ENCODE measurements at regions of chr5 and their contacts with region 1.

Region 1: DNA sequence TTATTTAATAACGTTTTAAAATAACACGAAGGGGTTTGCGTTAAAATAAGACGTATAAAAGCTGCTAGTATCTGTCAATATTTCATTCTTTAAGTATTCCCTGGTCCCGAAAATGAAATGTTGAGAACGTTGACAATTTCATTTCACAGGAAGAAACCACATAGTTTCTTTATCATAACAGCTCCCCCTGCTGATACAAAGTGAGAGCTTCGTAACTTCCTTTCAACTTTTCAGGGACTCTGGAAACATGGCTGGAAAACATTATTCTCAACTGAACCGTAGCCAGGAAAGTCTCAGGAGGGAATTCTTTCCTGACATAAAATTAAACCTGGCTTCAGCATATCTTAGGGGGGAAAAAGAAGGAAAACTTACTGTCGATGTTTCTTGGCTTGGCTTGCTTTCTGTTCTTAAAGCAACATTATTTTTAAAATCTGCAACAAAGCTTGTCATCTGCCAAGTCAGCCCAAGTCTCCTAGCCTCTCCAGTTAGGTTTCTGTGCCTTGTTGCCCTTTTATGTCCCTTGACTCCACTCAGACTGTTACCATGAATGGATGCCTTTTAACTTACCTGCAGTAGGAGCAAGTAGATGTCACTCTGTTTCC is 122.9 kb upstream of the DAB2 start:
- DNase-seq: peak; percentile 6
- ATAC-seq: no peak
- H3K4me3 Mint-ChIP-seq: no peak overlapping the region
- H3K27ac Mint-ChIP-seq: no peak overlapping the region
- H3K4me1 Mint-ChIP-seq: no peaks in the 10 kb centered on the region
- H3K27me3 Mint-ChIP-seq: peaks cover 3% of the 10 kb centered on the region
- CTCF ChIP-seq: peak; percentile 70

Region 2: DNA sequence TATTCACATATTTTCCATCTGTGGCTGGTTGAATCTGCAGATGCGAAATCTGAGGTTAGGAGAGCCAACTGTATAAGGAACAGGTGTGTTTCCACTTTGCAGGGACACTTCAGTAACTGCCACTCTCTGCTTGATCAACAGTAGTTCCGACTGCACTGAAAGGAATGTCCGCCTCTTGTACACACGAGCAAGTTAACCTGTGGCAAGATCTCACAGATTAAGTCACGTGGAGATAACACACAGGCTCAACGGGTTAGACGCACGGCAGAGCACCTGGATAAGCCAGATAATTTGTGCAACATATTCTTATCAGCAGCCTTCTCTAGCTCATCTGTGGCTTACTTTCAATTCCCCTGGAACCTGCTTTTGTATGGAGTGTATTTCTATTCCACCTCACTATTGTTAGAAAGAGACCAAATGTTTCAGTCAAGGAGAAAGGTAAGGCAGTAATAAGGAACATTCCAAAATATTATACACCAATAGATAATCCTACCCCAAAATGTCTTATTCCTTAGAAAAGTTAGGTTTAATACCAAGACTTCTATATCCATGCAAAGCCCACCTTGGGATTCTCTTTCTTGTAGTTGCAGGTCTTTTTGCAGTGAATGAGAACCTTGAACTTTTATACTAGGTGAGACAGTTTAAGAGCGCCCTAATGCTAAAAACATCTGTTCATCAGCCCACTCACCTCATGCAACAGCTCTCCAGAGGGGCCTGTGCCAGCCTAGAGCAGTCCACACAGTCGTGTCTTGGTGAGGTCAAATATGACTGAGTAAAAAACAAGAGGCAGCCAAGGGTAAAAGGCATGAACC is 176.9 kb before region 1 on chr5:
- CTCF ChIA-PET with region 1: interaction called, 71 read pairs
- POLR2A ChIA-PET with region 1: no interaction called
- intact Hi-C with region 1: no loop called
- DNase-seq: no peak
- ATAC-seq: no peak
- H3K4me3 Mint-ChIP-seq: no peak overlapping the region
- H3K27ac Mint-ChIP-seq: no peak overlapping the region
- H3K4me1 Mint-ChIP-seq: no peaks in the 10 kb centered on the region
- H3K27me3 Mint-ChIP-seq: peaks cover 1% of the 10 kb centered on the region
- CTCF ChIP-seq: no peak

Region 3: GRCh38 chr5:39424736-39425637 is 122.7 kb before region 1 on chr5 and contains the start of gene DAB2:
- CTCF ChIA-PET with region 1: interaction called, 10 read pairs
- POLR2A ChIA-PET with region 1: no interaction called
- intact Hi-C with region 1: no loop called
- DNase-seq: peak; percentile 61
- ATAC-seq: peak; percentile 87
- H3K4me3 Mint-ChIP-seq: peak within 1 kb of the TSS; percentile 70
- H3K27ac Mint-ChIP-seq: no peak within 1 kb of the TSS
- H3K4me1 Mint-ChIP-seq: no peaks in the 10 kb centered on the region
- H3K27me3 Mint-ChIP-seq: peaks cover 33% of the 10 kb centered on the region
- CTCF ChIP-seq: peak; percentile 51
- total RNA-seq, gene DAB2: 0.16 TPM in 1 of 2 experiments, not detected in the other

Region 4: DNA sequence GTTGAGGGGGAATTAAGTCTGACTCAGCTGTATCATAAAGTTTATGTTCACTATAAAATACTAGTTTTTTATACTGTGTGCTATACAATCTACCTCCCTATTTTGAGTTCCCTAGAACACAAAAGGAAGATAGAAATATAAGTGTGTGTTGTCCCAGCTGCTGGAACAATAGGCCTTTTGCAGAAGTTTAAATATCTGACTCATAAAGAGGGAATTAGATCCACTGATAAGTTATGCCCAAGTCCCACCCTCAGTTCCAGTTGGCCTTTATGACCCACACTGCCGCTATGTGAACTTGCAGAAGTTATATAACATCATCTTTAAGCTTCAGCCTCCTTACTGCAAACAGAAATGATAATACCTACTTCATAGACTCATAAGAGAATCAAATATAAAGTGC is 34.4 kb before region 1 on chr5:
- CTCF ChIA-PET with region 1: no interaction called
- POLR2A ChIA-PET with region 1: no interaction called
- intact Hi-C with region 1: no loop called
- DNase-seq: no peak
- ATAC-seq: no peak
- H3K4me3 Mint-ChIP-seq: no peak overlapping the region
- H3K27ac Mint-ChIP-seq: no peak overlapping the region
- H3K4me1 Mint-ChIP-seq: no peaks in the 10 kb centered on the region
- H3K27me3 Mint-ChIP-seq: peaks cover 5% of the 10 kb centered on the region
- CTCF ChIP-seq: no peak

Region 5: DNA sequence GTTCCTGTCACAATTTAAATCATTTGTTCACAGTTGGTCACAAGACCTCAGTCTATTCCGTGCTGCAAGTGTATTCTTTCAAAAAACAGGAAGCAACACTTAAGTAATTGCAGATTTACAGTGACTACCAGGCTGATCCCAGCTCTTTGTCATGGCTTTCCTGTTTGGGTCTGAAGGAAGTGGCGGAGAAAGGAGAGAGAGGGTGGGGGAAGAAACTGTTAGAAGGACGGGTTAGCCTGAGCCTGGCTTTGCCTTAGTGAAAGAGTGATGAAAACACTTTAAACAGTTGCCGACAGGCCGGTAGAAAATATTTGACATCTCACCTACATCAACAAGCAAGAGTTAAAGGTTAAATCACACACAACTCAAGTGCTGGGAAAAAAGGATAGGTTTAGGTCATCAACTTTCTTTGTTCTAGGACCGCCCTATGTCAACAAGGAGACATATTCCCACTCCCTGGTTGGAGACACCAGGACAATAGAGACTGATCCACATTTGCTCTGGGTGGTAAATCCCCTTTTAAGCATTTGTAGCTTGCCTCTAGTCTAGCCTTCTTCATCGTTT is 20.7 kb before region 1 on chr5:
- CTCF ChIA-PET with region 1: interaction called, 11 read pairs
- POLR2A ChIA-PET with region 1: no interaction called
- intact Hi-C with region 1: no loop called
- DNase-seq: no peak
- ATAC-seq: no peak
- H3K4me3 Mint-ChIP-seq: no peak overlapping the region
- H3K27ac Mint-ChIP-seq: no peak overlapping the region
- H3K4me1 Mint-ChIP-seq: no peaks in the 10 kb centered on the region
- H3K27me3 Mint-ChIP-seq: peaks cover 9% of the 10 kb centered on the region
- CTCF ChIP-seq: no peak

Region 6: GRCh38 chr5:39560726-39561125 is 13.1 kb after region 1 on chr5:
- CTCF ChIA-PET with region 1: interaction called, 10 read pairs
- POLR2A ChIA-PET with region 1: no interaction called
- intact Hi-C with region 1: no loop called
- DNase-seq: no peak
- ATAC-seq: no peak
- H3K4me3 Mint-ChIP-seq: no peak overlapping the region
- H3K27ac Mint-ChIP-seq: no peak overlapping the region
- H3K4me1 Mint-ChIP-seq: no peaks in the 10 kb centered on the region
- H3K27me3 Mint-ChIP-seq: peaks cover 4% of the 10 kb centered on the region
- CTCF ChIP-seq: no peak

Region 7: DNA sequence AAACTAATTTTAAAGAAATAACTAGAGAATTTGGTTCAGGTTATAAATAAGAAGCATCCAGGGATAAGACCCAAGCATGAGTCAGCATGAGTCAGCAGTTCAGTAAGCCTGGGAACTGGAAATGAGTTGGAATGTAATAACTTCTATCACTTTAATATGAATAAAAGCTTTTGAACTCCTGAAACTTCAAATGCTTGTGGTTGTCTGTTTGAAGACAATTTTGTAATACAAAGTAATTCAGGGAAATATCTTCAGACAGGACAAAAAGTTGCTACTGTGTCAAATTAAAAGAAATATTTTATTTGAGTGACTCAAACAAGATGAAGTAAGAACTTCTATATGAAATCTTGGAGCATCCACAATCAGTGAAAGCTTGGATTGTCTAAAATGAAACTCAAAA is 208.3 kb after region 1 on chr5:
- CTCF ChIA-PET with region 1: no interaction called
- POLR2A ChIA-PET with region 1: no interaction called
- intact Hi-C with region 1: no loop called
- DNase-seq: no peak
- ATAC-seq: no peak
- H3K4me3 Mint-ChIP-seq: no peak overlapping the region
- H3K27ac Mint-ChIP-seq: no peak overlapping the region
- H3K4me1 Mint-ChIP-seq: no peaks in the 10 kb centered on the region
- H3K27me3 Mint-ChIP-seq: peaks cover 9% of the 10 kb centered on the region
- CTCF ChIP-seq: no peak

Measured in activated CD8-positive, alpha-beta T cell treated with anti-CD3 and anti-CD28 coated beads for 36 hours (primary cell).